ENCODE measurements at regions of chr5 and their contacts with region 1.

Region 1: DNA sequence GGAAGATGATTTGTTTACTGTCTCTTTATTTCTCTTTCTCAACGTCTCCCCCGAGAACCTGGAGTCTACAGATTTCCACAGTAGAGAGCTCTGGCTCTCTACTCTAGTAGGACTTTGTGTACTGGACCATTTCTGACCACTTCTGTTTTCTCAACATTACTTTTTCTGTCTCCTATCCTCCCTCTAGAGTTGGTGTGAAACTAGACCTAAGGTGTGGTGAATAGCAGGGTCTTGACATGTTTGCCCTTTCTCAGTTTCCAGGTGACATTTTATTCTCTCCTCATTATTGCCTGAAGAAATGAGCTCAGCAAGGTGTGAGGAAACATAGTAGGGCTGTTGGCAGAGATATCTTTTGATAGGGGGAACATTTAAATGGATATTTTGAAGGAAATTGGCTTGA is 62.1 kb upstream of the IL6ST start:
- DNase-seq: no peak
- H3K4me3 Mint-ChIP-seq: no peak overlapping the region
- H3K27ac Mint-ChIP-seq: no peak overlapping the region
- H3K4me1 Mint-ChIP-seq: peaks cover 52% of the 10 kb centered on the region
- H3K27me3 Mint-ChIP-seq: peaks cover 5% of the 10 kb centered on the region

Region 2: GRCh38 chr5:56026863-56027300 is 30.0 kb before region 1 on chr5:
- intact Hi-C with region 1: loop called (anchors 2 kb)
- DNase-seq: no peak
- H3K4me3 Mint-ChIP-seq: no peak overlapping the region
- H3K27ac Mint-ChIP-seq: no peak overlapping the region
- H3K4me1 Mint-ChIP-seq: peaks cover 23% of the 10 kb centered on the region
- H3K27me3 Mint-ChIP-seq: peaks cover 32% of the 10 kb centered on the region

Region 3: DNA sequence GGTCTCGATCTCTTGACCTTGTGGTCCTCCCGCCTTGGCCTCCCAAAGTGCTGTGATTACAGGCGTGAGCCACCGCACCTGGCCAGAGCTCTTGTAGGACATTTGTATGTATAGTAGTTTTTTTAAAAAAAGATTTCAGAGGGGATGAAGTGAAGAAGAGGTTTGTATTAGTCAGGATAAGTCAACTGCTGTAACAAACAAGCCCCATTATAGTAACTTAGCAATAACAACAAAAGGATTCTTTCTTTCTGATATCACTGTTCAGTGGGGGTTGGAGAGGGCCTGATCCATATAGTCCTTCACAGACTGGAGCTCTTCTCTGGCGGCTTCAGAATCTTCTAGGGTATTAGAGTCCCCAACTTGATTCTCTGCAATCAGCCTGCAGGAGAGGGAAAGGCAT is 11.4 kb before region 1 on chr5:
- intact Hi-C with region 1: loop called (anchors 2 kb)
- DNase-seq: no peak
- H3K4me3 Mint-ChIP-seq: no peak overlapping the region
- H3K27ac Mint-ChIP-seq: no peak overlapping the region
- H3K4me1 Mint-ChIP-seq: peaks cover 23% of the 10 kb centered on the region
- H3K27me3 Mint-ChIP-seq: peaks cover 7% of the 10 kb centered on the region

Region 4: DNA sequence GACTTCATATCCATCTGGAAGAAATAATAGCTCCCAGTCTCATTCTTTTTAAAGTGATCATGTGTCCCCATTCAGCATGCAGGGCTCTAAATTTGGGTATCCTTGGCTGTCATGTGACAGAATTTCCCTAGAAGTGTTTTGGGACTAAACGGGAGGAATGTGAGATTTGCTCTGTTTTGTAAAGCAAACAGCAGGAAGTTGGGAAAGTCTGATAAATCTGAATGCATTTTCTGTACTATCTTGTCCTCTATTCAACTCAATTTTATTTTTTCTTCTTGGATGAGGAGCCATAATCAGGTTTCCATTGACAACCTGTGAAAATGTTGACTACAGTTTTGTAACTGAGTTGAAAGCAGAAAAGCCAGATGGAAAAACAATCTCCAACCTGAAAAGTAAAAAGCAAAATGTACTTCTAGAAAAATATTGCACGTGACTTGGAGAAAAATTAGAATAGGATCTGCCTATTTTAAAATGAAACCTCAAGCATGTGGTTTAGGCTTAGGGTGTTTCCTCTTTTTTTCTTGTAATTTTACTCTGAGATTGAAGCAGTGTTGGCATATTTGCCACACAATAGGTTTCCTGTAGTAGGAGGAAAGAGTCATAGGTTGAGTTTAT is 14.1 kb after region 1 on chr5:
- intact Hi-C with region 1: loop called (anchors 1 kb)
- DNase-seq: no peak
- H3K4me3 Mint-ChIP-seq: peak overlapping the region; percentile 22
- H3K27ac Mint-ChIP-seq: no peak overlapping the region
- H3K4me1 Mint-ChIP-seq: peaks cover 64% of the 10 kb centered on the region
- H3K27me3 Mint-ChIP-seq: no peaks in the 10 kb centered on the region

Region 5: DNA sequence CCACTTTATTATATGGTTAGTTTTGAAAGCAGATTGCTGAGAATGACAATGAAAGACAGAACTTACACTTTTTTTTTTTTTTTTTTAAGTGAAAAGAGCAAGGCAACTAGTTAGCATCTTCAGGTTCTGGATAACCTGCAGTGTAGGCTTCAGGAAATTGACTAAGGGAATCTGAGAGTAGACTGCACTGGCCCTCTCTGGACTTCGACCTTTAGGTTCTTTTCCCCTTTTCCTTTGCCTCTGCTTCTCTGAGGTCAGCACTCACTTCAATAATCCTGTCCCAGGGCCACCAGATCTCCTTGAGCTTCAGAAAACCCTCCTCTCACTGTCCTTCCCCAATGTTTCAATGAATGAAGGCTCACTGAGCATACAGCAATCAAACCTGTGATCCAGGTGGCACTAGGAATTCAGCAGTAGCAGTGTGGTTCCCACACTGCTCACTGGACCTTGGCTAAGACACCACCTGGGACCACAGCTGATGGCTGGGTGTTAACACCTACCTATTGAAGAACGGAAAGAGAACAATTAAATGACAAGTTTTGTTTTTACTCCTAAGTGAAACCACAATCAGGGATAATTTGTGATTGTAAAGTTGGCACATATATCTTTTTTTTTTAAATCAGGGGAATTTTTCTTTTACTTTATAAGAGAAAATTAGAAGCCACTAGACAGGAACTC is 23.6 kb after region 1 on chr5:
- intact Hi-C with region 1: loop called (anchors 2 kb)
- DNase-seq: no peak
- H3K4me3 Mint-ChIP-seq: peak overlapping the region; percentile 38
- H3K27ac Mint-ChIP-seq: peak overlapping the region; percentile 37
- H3K4me1 Mint-ChIP-seq: peaks cover 45% of the 10 kb centered on the region
- H3K27me3 Mint-ChIP-seq: no peaks in the 10 kb centered on the region

Region 6: DNA sequence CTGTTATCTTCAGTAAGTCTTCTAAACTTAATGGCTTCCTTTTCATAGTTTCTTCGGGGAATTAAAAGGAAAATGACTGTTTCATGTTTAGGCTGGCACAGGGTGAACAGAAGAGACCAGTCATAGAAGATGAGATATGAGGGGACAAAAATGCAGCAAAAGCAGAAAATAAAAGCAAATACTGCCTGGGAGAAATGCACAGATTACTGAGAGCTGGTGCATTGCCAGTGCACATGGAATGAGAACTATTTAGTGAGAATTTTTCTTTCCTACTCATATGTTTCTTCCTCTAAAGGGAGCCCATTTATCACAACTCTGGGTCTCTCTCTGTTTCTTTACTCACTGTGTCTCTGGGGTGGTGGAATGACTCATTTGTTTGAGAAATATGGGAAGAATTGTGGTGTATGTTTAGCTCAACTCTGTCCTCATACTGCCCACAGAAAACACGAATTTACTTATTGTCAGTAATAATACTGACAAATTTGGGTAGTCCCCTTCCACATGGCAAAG is 202.2 kb after region 1 on chr5:
- intact Hi-C with region 1: loop called (anchors 5 kb)
- DNase-seq: no peak
- H3K4me3 Mint-ChIP-seq: no peak overlapping the region
- H3K27ac Mint-ChIP-seq: no peak overlapping the region
- H3K4me1 Mint-ChIP-seq: no peaks in the 10 kb centered on the region
- H3K27me3 Mint-ChIP-seq: peaks cover 14% of the 10 kb centered on the region

Measured in activated T-helper 1 cell treated with anti-CD3 and anti-CD28 coated beads, Interleukin-12 subunit alpha, Interleukin-12 subunit beta, Interleukin-2, Interleukin-4 antibody, amounts not matched to agents 30 ng/mL and 10 ng/mL and 1 ng/mL, durations not matched to agents 14 hours and 24 hours and 36 hours (primary cell).